ENCODE measurements at regions of chr12 and their contacts with region 1.

Region 1: GRCh38 chr12:55940065-55940732 is 9.2 kb downstream of the DGKA start:
- DNase-seq: peak; percentile 90
- H3K4me3 ChIP-seq: no peak overlapping the region; a peak in 1 of 4 replicates
- H3K27ac ChIP-seq: peak overlapping the region in 1 of 2 experiments; percentile 2; a peak in 1 of 4 replicates
- H3K4me1 ChIP-seq: peaks cover 0 to 9% of the 10 kb centered on the region in 2 experiments; a peak in 1 of 4 replicates
- H3K27me3 ChIP-seq: no peaks in the 10 kb centered on the region
- CTCF ChIP-seq: peak; percentile 90
- EP300 ChIP-seq: no peak
- RAD21 ChIP-seq: peak; percentile 86

Region 2: GRCh38 chr12:55955800-55956508 is 15.8 kb after region 1 on chr12:
- CTCF ChIA-PET with region 1: interaction called, 27 read pairs
- POLR2A ChIA-PET with region 1: no interaction called
- DNase-seq: peak; percentile 41
- H3K4me3 ChIP-seq: no peak overlapping the region
- H3K27ac ChIP-seq: peak overlapping the region in 1 of 2 experiments; percentile 27; a peak in 1 of 4 replicates
- H3K4me1 ChIP-seq: peaks cover 0 to 15% of the 10 kb centered on the region in 2 experiments; a peak in 1 of 4 replicates
- H3K27me3 ChIP-seq: no peaks in the 10 kb centered on the region
- CTCF ChIP-seq: peak; percentile 66
- EP300 ChIP-seq: no peak
- RAD21 ChIP-seq: no peak

Region 3: GRCh38 chr12:55966408-55967281 is 26.4 kb after region 1 on chr12 and contains the start of gene CDK2:
- CTCF ChIA-PET with region 1: interaction called, 27 read pairs
- POLR2A ChIA-PET with region 1: no interaction called
- DNase-seq: peak; percentile 95
- H3K4me3 ChIP-seq: peak within 1 kb of the TSS; percentile 89 to 93
- H3K27ac ChIP-seq: peak within 1 kb of the TSS; percentile 54 to 61; a peak in 3 of 4 replicates
- H3K4me1 ChIP-seq: peaks cover 14 to 20% of the 10 kb centered on the region in 2 experiments; a peak in 3 of 4 replicates
- H3K27me3 ChIP-seq: no peaks in the 10 kb centered on the region
- CTCF ChIP-seq: no peak
- EP300 ChIP-seq: no peak
- RAD21 ChIP-seq: no peak
- polyA plus RNA-seq, gene CDK2: 34.7 and 43.3 TPM in 2 replicates

Region 4: DNA sequence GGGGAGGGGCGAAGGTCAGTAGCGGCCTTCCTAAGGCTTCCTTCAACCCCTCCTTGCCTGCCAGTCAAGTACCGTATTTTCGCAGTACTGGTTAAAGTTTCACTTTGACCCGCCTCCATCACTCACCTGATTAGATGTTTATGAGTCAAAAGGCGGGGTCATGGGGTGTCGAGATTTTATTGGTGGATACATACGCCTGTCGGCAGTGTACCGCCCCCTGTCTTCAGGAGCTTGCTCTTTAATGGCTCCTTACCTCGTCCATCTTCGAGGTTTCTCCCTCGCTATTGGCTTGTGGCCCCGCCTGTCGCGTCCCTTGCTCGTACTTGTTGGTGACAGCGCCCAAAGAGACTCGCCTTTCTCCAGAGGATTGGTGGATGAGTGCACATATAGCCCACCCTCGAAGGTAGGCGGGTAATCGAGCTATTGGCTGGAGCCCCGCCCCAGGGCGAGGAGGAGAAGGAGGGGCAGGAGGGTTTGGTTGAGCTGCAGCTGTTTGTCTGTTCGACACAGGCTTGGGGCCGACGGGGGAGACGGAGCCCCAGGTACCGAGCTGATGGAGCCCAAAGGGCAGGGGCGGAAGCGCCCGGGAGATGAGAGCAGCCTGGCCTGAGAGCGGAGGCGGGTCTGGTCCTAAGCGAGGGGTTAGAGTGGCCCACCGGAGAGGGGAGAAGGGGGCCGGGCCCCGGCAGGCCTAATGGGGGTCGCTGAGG is 33.6 kb after region 1 on chr12 and contains the start of gene RAB5B:
- CTCF ChIA-PET with region 1: interaction called, 15 read pairs
- POLR2A ChIA-PET with region 1: interaction called, 5 read pairs
- DNase-seq: peak; percentile 94
- H3K4me3 ChIP-seq: peak within 1 kb of the TSS; percentile 69 to 94
- H3K27ac ChIP-seq: peak within 1 kb of the TSS; percentile 83 to 94
- H3K4me1 ChIP-seq: peaks cover 7% of the 10 kb centered on the region in 2 experiments; a peak in 3 of 4 replicates
- H3K27me3 ChIP-seq: no peaks in the 10 kb centered on the region
- CTCF ChIP-seq: no peak
- EP300 ChIP-seq: no peak
- RAD21 ChIP-seq: no peak
- polyA plus RNA-seq, gene RAB5B: 54.0 and 79.4 TPM in 2 replicates